Endothelial cell of umbilical vein (primary cell): ENCODE measurements at regions of chr1 and their contacts with region 1.

Region 1: DNA sequence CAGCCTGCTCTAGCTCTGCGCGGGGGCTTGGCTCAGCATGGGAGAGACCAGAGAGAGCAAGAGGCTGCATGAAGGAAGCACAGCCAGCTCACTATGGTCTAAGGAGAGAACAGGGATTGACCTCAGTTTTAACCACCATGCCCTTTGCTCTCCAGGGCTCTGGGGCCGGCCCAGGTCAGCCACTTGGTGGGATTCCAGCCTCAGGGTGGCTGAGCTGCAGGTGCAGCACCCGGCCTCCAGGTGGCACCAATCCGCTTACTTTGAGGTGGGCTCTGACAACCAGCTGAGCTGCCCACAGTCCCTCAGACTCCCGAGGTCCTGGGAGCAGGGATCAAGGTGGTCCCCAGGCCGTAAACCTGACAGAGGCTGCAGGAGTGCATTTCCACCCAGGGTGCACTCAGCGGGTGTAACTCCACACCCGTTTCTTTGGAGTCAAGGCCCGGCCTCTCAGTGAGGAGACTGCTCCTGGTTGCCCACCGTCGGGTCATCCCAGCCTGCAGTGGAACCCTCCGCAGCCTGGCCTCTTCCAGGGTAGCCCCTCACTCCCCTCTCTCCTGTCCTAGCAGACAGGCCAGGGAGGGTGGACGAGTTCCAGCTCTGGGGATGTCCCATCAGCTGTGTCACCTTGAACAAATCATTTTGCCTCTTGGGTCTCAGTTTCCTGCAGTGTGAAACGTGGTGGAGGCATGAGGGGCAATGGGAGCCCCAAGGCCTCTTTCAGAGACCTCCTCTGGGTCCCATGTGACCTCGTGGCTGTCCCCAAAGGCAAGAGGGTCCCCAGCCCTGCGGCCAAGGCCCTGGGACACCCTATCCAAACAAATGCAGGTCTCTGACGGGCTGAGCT is 607 bp upstream of the LGR6 start:
- DNase-seq: peak; percentile 49
- H3K4me3 ChIP-seq: no peak overlapping the region
- H3K27ac ChIP-seq: no peak overlapping the region
- H3K4me1 ChIP-seq: no peaks in the 10 kb centered on the region
- H3K27me3 ChIP-seq: peaks cover 32 to 33% of the 10 kb centered on the region in 2 experiments
- CTCF ChIP-seq: peak; percentile 87 to 93
- POLR2A ChIP-seq: no peak

Region 2: DNA sequence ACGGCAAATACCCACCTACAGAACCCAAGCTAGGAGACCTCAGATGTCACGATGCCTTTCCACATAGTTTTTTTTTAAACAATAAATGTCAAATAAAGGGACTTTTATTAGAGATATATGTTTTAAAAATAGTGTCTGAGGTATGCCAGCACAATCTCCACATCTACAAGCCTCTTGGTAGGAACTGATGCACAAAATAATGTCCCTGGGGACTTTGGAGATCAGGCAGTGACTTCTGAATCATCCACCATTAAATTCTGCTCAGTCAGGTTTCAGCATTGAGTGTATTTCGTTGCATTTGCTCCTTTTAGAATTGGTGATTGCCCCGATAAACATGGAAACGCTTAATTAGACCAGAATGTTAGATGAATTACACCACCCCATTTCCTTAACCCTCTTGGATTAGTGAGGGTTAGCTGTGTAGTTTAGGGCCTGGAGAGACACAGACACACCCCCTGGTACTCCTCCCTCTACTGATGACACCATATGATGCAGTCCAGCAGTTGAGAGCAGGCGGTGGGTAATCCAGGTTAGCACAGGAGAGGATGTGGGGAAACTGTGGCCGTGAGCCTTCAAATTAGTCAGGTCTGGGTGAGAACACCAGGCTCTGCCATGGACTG is 34.2 kb after region 1 on chr1:
- CTCF ChIA-PET with region 1: interaction called, 11 read pairs
- POLR2A ChIA-PET with region 1: no interaction called
- dilution Hi-C with region 1: no loop called
- intact Hi-C with region 1: no loop called
- DNase-seq: no peak
- H3K4me3 ChIP-seq: no peak overlapping the region
- H3K27ac ChIP-seq: no peak overlapping the region
- H3K4me1 ChIP-seq: no peaks in the 10 kb centered on the region
- H3K27me3 ChIP-seq: peaks cover 4 to 11% of the 10 kb centered on the region in 2 experiments
- CTCF ChIP-seq: no peak
- POLR2A ChIP-seq: no peak

Region 3: DNA sequence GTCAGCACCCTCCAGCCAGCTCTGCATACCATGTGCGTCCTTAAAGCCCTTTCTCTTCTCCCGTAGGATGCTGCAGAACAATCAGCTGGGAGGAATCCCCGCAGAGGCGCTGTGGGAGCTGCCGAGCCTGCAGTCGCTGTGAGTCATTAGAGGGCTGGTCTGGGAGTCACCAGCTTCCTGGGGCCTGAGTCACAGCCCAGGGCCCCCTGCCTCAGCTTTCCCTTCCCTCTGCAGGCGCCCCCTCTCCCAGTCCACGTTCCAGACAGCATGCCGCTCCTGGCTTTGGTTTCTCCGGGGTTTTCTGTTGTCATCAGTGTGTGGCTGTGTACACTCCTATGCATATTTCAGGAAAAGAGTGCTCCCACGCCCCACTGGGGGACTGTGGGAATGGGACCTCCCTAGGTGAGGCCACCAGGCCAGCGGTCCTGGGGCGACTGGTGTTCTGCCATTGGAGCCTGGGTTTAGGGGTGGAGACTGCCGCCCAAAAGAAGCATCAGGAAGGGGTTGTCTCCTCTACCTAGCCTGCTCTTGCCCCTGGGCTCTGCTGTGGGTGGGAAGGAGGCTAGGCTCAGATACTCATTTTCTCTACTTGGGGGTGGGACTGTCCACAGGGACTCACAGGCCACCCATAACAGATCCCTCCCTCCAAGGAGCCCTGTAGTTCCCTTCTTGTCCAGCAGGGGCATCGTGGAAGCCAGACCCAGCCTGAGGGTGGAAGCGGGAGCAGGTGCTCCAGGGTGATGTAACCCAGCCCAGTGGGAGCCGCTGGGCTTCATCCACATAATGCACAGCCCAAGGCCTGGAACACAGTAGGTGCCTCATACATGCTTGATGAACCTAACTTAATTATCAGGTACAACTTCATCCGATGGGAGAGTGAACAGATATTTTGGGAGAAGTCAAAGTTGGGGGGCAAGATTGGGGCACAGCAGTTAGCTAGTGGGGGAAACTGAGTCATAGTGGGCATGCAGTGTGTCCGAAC is 43.2 kb after region 1 on chr1:
- CTCF ChIA-PET with region 1: interaction called, 13 read pairs
- POLR2A ChIA-PET with region 1: no interaction called
- dilution Hi-C with region 1: no loop called
- intact Hi-C with region 1: no loop called
- DNase-seq: peak; percentile 56
- H3K4me3 ChIP-seq: no peak overlapping the region
- H3K27ac ChIP-seq: peak overlapping the region; percentile 49
- H3K4me1 ChIP-seq: peaks cover 13% of the 10 kb centered on the region
- H3K27me3 ChIP-seq: peaks cover 0 to 4% of the 10 kb centered on the region in 2 experiments
- CTCF ChIP-seq: peak; percentile 80 to 88
- POLR2A ChIP-seq: no peak